Activated T-helper 1 cell treated with anti-CD3 and anti-CD28 coated beads, Interleukin-12 subunit alpha, Interleukin-12 subunit beta, Interleukin-2, Interleukin-4 antibody, amounts not matched to agents 30 ng/mL and 10 ng/mL and 1 ng/mL, durations not matched to agents 14 hours and 24 hours and 36 hours (primary cell): ENCODE measurements at regions of chr3 and their contacts with region 1.

Region 1: DNA sequence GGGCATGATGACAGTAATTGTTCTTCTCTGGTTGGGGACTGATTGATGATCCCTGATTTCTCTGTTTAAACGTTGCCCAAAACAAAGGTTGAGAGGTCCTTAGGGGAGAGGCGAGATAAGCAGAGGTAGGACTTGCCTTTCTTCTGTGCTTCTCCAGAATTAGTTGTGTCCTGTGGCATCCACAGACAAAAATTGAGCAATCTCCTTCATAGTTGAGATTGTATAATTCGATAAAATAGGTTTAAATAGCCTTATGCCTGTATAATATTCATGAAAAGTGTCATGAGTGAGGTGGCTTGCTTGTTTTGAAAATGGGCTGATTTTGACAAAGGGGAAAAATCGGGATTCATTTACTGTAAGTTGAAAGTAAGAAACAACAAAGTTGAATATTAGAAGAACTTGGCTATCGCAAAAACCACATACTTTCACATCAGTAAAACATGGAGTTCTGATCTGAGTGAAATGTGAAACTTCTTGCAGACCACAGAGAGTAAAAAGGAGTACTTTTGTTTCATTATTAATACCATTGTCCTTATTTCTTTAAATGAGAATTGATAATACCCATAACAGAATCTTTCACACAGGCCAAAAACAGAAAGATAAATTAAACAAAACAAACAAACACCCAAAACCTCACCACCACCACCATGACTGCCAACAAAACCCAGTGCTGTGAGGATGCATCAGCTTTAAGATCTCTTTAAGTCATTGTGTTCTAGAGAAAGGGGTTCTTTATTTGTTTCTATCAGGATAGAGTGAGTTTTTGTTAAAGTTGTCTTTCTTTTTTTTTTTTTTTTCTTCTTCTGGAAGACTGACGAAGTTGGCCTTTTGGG is 155.7 kb downstream of the LPP start:
- DNase-seq: no peak
- H3K4me3 Mint-ChIP-seq: peak overlapping the region; percentile 40
- H3K27ac Mint-ChIP-seq: peak overlapping the region; percentile 64
- H3K4me1 Mint-ChIP-seq: peaks cover 35% of the 10 kb centered on the region
- H3K27me3 Mint-ChIP-seq: peaks cover 9% of the 10 kb centered on the region

Region 2: DNA sequence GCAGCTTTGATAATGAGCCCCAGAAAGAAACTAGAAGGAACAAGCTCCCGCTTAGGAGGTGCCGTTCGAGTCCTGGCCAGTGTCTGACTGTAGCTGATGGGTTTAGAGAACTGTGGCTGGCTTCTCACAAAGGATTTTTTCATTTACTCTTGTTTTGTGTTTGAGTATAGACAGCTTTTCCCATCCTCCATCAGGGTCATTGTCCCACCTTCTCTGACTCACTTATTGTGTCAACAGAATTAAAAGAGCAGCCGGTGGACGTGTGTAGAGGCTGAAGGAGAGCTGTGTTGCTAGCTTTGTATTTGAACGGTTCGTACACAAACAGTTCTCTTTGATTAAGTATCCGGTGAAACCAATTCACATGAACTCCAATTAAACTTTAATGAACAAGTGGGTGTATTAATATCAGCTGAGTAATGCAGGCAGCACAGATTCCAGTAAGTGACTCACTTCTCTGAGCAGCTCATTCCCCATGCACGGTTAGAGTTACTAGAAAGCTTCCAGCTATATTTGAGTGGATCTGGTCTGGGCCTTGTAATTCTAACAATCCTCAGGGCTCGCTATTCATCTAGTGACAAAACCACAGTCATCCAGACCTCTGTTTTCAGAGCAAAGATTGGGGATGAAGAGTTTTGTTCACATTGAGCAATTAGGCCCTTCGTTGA is 14.7 kb before region 1 on chr3:
- intact Hi-C with region 1: loop called (anchors 1 kb)
- DNase-seq: no peak
- H3K4me3 Mint-ChIP-seq: no peak overlapping the region
- H3K27ac Mint-ChIP-seq: peak overlapping the region; percentile 33
- H3K4me1 Mint-ChIP-seq: peaks cover 86% of the 10 kb centered on the region
- H3K27me3 Mint-ChIP-seq: no peaks in the 10 kb centered on the region

Region 3: DNA sequence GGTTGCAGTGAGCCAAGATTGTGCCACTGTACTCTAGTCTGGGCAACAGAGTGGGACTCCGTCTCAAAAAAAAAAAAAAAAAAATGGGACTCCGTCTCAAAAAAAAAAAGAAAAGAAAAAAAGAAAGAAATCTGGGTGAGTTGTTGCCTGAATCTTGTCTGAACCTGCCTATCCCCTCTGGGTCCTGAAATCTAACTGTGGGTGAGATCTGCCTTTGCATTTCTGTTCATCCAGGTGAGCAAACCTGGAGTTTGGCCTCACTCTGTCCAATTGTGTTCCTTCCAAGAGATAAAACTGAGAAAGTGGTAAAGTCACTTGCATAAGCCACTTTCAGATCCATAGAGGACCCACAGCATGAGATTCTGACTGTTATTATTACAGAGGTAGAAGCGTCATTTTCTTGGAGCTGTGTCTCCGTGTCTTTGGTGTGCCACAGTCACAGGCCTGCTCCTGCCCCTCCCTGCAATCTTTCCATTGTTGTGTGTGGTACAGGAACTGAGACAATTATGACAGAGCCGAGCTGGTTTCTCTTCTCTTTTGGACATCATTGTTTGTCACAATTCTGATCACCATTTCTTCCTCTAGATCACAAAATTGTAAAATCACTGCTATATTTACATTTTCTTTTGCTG is 80.2 kb after region 1 on chr3:
- intact Hi-C with region 1: no loop called
- DNase-seq: peak; percentile 33
- H3K4me3 Mint-ChIP-seq: peak overlapping the region; percentile 25
- H3K27ac Mint-ChIP-seq: peak overlapping the region; percentile 86
- H3K4me1 Mint-ChIP-seq: peaks cover 44% of the 10 kb centered on the region
- H3K27me3 Mint-ChIP-seq: peaks cover 1% of the 10 kb centered on the region

Region 4: DNA sequence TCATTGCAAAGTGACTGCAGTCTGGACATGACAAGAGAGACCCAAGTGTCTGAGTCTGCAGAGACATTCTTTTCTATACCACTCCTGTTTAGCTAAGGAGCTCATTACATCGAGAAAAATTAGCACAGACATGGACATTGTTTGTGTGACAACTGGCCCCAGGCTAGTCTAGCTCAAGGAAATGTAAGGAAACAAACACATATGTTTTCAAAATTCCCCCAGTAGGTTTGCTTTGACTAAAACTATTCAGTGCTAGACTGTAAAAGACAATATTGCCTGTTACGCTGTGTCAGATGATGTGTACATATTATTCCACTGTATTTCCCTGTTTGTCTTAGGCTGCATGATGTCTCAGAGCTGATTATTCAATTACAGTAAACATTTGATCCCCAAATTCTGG is 903.1 kb after region 1 on chr3:
- intact Hi-C with region 1: no loop called
- DNase-seq: no peak
- H3K4me3 Mint-ChIP-seq: no peak overlapping the region
- H3K27ac Mint-ChIP-seq: no peak overlapping the region
- H3K4me1 Mint-ChIP-seq: no peaks in the 10 kb centered on the region
- H3K27me3 Mint-ChIP-seq: no peaks in the 10 kb centered on the region

Region 5: DNA sequence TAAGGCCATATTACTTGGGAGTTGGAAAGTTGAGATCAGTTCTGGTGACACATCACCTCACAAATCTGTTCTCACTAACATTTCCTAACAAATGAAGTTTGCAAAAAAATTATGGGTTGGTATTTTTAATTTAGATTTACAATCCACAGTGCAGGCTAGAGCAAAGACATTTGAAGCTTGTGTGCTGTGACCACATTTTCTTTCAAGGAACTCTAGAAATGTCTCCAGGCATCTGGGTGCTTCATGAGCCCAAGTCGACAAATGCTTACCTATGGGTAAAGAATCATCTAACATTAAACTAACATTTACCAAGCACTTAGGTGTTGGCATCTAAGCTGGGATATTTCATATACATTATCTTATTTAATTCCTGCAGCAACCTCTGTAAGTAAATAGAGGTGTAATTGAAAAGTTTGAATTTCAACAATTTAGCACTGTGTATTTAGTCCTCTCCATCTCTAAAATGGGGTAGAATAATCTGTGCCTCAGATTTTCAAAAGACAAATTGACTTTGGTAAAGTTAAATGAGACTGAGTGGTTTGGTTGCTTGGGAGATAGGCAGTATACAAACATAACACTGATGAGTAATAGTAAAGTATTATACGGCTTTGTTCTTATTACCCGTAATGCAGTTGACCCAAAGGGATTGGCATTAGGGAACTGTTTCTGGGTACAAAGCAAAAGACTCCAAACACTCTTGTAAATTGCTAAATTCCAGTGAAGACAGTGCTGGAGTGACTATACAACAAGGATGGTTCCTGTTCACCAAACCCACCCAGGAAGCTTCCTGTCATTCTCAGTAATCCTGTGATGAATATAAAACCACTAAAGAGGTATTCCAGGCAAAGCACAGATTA is 1024.6 kb after region 1 on chr3:
- intact Hi-C with region 1: no loop called
- DNase-seq: no peak
- H3K4me3 Mint-ChIP-seq: no peak overlapping the region
- H3K27ac Mint-ChIP-seq: no peak overlapping the region
- H3K4me1 Mint-ChIP-seq: peaks cover 40% of the 10 kb centered on the region
- H3K27me3 Mint-ChIP-seq: no peaks in the 10 kb centered on the region